CD8-positive, alpha-beta T cell (primary cell): ENCODE measurements at regions of chr4 and their contacts with region 1.

Region 1: DNA sequence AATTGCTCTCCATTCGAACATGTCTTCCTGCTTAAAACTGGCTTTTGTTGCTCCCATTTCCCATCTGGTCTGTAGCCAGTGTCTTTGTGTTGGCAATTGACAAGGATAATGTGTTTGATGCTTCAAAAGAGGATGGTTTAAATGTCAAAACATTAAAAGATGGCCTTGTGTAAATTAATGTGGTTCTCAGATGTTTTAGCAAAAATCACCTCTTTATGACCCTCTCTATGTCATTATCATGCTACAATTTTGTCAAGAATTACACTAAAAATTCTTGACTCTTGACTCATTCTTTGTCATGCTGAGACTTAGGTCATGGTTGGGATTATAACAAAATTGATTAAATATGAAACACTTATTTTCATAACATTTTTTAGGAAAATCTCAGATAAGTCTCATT is 47.4 kb downstream of the TMEM131L start:
- DNase-seq: no peak
- ATAC-seq: no peak
- H3K4me3 ChIP-seq: no peak overlapping the region
- H3K4me3 Mint-ChIP-seq: no peak overlapping the region
- H3K27ac ChIP-seq: no peak overlapping the region
- H3K27ac Mint-ChIP-seq: no peak overlapping the region
- H3K4me1 ChIP-seq: peaks cover 18% of the 10 kb centered on the region
- H3K4me1 Mint-ChIP-seq: peaks cover 74% of the 10 kb centered on the region
- H3K27me3 ChIP-seq: no peaks in the 10 kb centered on the region
- H3K27me3 Mint-ChIP-seq: no peaks in the 10 kb centered on the region
- CTCF ChIP-seq: no peak

Region 2: DNA sequence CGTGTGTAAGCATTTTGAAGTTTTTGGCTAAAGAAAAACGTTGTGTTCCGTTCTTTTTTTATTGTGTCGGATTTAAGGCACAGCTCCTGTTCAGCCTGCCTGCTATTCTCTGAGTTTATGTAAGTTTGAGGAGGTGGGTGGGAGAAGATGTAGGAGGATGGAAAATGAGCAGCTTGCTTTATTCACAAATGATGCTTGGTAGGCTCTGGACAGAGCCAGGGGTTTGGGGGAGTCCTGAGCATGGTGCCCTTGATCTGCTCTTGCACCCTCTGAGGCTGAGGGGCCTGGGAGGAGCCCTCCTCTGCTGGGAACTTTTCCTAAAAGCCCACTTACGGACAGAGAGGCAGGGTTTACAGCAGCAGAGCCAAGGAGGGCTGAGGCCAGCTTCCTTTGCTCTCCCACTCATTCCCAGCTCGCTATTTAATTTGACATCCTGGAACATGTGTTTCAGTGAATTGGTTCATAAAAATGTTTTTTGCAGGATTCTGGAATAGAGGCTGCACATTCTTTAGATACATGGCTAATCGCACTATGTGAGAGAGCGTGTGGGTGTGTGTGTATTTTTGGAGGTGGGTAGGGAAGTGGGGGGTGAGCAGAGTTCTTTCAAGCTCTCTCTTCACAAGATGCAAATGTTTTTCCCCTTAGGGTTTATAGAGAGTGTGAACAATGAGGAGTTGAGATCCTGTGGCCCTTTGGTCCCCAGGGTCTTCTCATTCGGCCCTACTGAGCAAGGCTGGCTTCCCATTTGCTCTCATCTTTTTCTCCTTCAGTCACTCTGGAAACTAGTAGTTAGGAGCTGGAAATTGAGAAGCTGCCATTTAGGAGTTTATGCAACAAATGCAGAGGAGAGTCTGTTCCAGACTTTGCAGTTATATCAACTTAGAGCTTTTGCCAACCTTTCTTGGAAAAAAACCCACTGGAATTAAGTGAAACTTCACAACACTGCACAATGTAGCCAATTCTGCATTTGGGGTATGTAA is 15.3 kb before region 1 on chr4:
- CTCF ChIA-PET with region 1: interaction called, 4 read pairs
- POLR2A ChIA-PET with region 1: interaction called, 3 read pairs
- intact Hi-C with region 1: loop called in 1 of 2 experiments (anchors 2 kb)
- DNase-seq: peak in 2 of 9 experiments; percentile 27 to 62
- ATAC-seq: peak; percentile 15
- H3K4me3 ChIP-seq: peak overlapping the region in 1 of 2 experiments; percentile 37
- H3K4me3 Mint-ChIP-seq: peak overlapping the region; percentile 66
- H3K27ac ChIP-seq: peak overlapping the region; percentile 54 to 78
- H3K27ac Mint-ChIP-seq: peak overlapping the region; percentile 97
- H3K4me1 ChIP-seq: peaks cover 92% of the 10 kb centered on the region
- H3K4me1 Mint-ChIP-seq: peaks cover 90% of the 10 kb centered on the region
- H3K27me3 ChIP-seq: no peaks in the 10 kb centered on the region
- H3K27me3 Mint-ChIP-seq: no peaks in the 10 kb centered on the region
- CTCF ChIP-seq: no peak

Region 3: GRCh38 chr4:153528705-153529485 is 15.3 kb after region 1 on chr4:
- CTCF ChIA-PET with region 1: interaction called, 4 read pairs
- POLR2A ChIA-PET with region 1: interaction called, 3 read pairs
- intact Hi-C with region 1: loop called in 1 of 2 experiments (anchors 1 kb)
- DNase-seq: no peak
- ATAC-seq: peak; percentile 21
- H3K4me3 ChIP-seq: peak overlapping the region in 1 of 2 experiments; percentile 28
- H3K4me3 Mint-ChIP-seq: peak overlapping the region; percentile 77
- H3K27ac ChIP-seq: peak overlapping the region; percentile 17 to 76
- H3K27ac Mint-ChIP-seq: peak overlapping the region; percentile 94
- H3K4me1 ChIP-seq: peaks cover 96% of the 10 kb centered on the region
- H3K4me1 Mint-ChIP-seq: peaks cover 88% of the 10 kb centered on the region
- H3K27me3 ChIP-seq: no peaks in the 10 kb centered on the region
- H3K27me3 Mint-ChIP-seq: no peaks in the 10 kb centered on the region
- CTCF ChIP-seq: no peak